MCF 10A (cell line): ENCODE measurements at regions of chr17 and their contacts with region 1.

Region 1: DNA sequence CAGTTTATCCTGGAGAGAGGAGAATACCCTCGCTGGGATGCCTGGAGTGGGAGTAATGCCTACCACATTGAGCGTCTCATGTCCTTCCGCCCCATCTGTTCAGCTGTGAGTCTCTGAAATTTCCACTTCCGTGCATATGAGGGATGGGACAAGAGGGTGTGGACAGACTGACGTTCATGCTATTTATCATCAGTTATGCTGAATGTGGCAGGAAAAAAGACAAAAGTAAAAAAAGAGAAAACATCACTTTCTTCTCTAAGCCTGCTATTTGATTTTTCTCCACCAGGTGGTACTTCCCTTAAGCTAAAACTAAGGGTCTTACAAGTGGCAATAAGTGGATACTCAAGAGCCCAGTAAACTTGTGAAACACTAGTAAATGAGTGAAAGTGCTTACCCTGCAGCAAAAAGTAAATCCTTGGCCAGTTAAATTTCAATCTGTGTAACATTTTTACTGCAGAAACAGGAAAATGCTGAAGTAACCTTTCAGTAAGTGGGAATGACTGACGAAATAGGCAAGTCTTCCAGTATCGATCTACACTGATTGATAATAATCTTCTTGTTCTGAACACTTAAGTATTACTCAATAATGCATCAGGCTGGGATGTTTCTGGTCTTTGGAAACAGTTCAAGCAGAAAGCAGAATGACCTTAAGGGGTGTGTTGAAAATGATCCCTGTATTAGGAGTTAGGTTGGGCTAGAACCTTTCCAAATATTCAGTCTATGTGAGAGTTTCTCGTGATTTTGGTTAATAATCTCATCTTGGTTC is 5.6 kb downstream of the CRYBA1 start:
- DNase-seq: no peak
- H3K4me3 Mint-ChIP-seq: no peak overlapping the region
- H3K27ac Mint-ChIP-seq: peak overlapping the region; percentile 22
- H3K4me1 Mint-ChIP-seq: peaks cover 30% of the 10 kb centered on the region
- H3K27me3 Mint-ChIP-seq: no peaks in the 10 kb centered on the region
- CTCF ChIP-seq: peak; percentile 62

Region 2: DNA sequence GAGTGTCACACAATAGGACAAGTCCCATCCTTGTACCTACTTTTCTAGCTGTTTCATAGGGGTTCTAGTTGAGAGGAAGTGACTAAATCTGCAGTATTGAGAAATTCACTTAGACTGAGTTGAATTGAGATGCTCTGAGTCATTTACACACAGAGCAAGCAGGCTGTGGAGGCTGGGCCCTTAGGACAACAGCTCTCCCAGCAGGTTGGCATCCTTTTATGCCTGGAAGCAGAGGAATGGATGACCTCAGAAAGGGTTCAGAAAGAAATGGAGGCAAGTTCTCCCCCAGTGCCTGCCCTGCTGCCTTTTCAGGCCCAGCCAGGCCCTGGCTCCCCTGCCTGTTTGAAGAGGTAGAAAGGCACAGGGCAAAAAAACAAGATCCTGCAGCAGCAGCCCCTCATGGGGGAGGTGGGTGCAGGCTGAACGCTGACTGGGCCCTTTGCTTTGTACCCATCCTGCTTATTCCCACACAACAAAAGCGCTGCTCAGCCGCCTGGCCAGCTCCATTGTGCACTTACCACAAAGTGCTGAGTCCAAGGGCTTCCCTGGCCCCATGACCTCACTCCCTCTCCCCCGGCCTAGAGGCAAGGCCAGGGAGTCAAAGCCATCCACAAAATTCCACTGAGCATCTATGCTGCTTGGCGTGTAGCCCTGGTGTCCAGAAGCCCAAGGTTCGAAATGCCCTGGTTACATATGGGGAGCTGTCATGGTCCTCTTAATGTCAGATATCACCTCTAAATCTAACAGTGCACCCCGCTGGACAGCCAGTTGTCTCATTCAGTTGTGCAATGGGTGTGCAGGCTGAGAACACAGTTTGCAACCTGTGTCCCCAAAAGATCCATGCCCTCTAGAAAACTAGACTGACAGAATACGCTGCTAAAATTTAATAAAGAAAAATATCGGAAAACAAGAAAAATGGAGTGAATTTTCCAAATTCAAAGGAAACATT is 11.0 kb before region 1 on chr17:
- CTCF ChIA-PET with region 1: interaction called, 7 read pairs
- POLR2A ChIA-PET with region 1: interaction called, 79 read pairs
- intact Hi-C with region 1: no loop called
- DNase-seq: peak; percentile 97
- H3K4me3 Mint-ChIP-seq: no peak overlapping the region
- H3K27ac Mint-ChIP-seq: peak overlapping the region; percentile 75
- H3K4me1 Mint-ChIP-seq: peaks cover 32% of the 10 kb centered on the region
- H3K27me3 Mint-ChIP-seq: no peaks in the 10 kb centered on the region
- CTCF ChIP-seq: no peak

Region 3: GRCh38 chr17:29263916-29264315 is 11.6 kb after region 1 on chr17:
- CTCF ChIA-PET with region 1: interaction called, 9 read pairs
- POLR2A ChIA-PET with region 1: interaction called, 14 read pairs
- intact Hi-C with region 1: no loop called
- DNase-seq: no peak
- H3K4me3 Mint-ChIP-seq: no peak overlapping the region
- H3K27ac Mint-ChIP-seq: no peak overlapping the region
- H3K4me1 Mint-ChIP-seq: peaks cover 13% of the 10 kb centered on the region
- H3K27me3 Mint-ChIP-seq: no peaks in the 10 kb centered on the region
- CTCF ChIP-seq: no peak